ENCODE measurements at regions of chr7 and their contacts with region 1.

Region 1: GRCh38 chr7:92447345-92448204 is at the start of gene GATAD1:
- DNase-seq: peak; percentile 94 to 96
- ATAC-seq: peak; percentile 99
- H3K4me3 ChIP-seq: peak within 1 kb of the TSS; percentile 66 to 98
- H3K27ac ChIP-seq: peak within 1 kb of the TSS; percentile 84 to 88
- H3K4me1 ChIP-seq: no peaks in the 10 kb centered on the region
- H3K27me3 ChIP-seq: no peaks in the 10 kb centered on the region
- total RNA-seq, gene GATAD1: 34.3 to 48.7 TPM

Region 2: DNA sequence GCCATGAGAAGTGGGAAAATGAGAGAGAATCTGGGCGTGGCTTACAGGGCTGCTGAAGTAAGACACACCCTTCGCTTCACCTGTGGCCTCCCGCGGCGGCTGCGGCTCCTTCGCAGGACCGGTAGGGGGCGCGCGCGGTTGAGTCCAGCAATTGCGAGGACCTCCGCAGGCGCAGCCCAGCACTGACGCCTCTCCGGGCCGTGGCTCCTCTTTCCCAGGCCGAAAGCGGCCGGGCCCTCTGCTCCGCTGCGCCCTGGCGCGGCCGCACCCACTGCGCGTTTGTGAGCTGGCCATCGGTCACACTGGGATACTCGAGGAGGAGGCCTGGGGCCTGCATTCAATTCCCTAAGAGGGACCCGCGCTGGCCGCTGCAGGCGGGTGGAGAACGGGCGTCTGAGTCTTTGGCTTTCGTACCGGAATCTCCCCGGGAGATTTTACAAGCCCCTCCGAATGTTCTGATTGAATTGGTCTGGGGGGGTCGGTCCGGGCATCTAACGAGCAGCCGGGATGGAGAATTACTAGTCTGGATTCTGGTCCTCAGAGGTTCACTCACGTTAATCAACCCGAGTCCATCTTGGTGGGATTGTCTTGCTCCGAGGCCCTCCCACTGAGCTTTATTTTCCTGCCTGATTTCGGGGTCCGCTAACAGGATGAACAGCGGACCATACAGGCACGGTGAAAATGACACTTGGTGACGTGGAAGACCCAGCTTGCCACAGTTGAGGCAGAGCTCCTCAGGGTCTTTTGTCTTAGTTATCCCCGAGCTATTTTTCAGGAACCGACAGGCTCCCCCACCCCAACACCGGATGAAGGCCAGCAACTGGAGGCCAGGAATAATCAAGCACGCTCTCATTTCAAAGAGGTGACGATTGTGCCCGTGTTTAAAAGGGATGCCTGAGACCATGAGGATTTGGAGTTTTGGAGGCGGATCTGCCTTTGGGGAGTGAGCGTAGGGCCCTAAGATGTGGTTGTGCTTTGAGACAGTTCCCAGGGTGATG is 268.3 kb before region 1 on chr7 and contains the start of gene LRRD1:
- intact Hi-C with region 1: loop called (anchors 10 kb)
- DNase-seq: peak; percentile 89 to 95
- ATAC-seq: peak; percentile 98
- H3K4me3 ChIP-seq: peak within 1 kb of the TSS; percentile 36 to 74
- H3K27ac ChIP-seq: peak within 1 kb of the TSS in 1 of 2 donors; percentile 74
- H3K4me1 ChIP-seq: no peaks in the 10 kb centered on the region
- H3K27me3 ChIP-seq: no peaks in the 10 kb centered on the region
- total RNA-seq, gene LRRD1: 0.51 TPM in 1 of 2 donors, not detected in the other

Region 3: DNA sequence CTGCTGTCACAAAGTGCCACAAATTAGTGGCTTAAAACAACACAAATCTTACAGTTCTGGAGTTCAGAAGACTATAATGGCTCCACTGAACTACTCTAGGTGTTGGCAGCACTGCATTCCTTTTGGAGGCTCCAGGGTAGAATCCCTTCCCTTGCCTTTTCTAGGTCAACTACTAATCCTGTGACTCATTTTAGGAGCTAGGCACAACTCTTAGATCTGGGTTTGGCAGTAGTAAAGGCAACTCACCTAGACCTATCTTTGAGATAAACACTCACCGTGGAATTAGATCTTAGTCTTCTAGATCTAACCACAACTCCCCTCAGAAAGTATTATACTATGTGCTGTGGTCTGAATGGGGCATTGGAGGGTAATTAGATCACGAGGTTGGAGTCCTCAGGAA is 141.4 kb before region 1 on chr7:
- intact Hi-C with region 1: no loop called
- DNase-seq: no peak
- ATAC-seq: no peak
- H3K4me3 ChIP-seq: no peak overlapping the region
- H3K27ac ChIP-seq: no peak overlapping the region
- H3K4me1 ChIP-seq: no peaks in the 10 kb centered on the region
- H3K27me3 ChIP-seq: no peaks in the 10 kb centered on the region

Region 4: DNA sequence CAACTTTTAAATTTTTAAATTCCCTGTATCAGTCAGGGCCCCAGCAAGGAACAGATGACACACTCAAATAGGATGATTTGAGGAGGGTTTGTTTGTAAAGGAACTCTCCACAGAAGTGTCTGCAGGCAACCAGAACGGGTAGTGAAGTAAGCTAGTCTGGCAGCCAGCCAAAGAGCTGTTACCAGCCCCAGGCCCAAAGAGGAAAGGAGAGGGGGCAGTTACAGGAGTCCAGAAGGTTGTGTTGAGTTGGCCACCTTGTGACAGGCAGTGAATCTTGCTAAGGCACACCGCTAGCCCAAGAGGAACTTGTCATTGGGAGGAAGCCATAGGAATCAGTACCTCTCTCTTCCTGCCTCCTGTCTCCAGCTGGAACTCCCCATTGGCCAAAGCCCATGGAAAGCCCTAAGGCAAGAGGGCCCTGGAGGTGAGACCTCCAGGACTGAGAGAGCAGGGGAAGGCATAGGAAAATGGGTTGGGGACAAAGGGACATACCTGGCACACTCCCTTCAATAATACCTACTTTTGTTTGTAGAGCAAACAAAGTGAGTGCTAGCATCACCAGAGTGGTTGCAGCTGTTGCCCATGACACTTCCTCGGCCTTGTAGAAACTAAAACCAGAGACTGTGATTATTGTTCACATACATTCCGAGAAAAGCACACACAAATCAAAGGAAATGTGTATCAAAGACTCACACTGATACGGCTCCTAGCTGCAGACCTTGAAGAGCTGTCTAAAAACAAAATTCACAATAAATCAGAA is 25.7 kb before region 1 on chr7:
- intact Hi-C with region 1: loop called in 1 of 2 experiments (anchors 2 kb)
- DNase-seq: no peak
- ATAC-seq: no peak
- H3K4me3 ChIP-seq: no peak overlapping the region
- H3K27ac ChIP-seq: no peak overlapping the region
- H3K4me1 ChIP-seq: no peaks in the 10 kb centered on the region
- H3K27me3 ChIP-seq: no peaks in the 10 kb centered on the region